Heart left ventricle (tissue), 16 donors: ENCODE measurements at regions of chr10 and their contacts with region 1.

Region 1: DNA sequence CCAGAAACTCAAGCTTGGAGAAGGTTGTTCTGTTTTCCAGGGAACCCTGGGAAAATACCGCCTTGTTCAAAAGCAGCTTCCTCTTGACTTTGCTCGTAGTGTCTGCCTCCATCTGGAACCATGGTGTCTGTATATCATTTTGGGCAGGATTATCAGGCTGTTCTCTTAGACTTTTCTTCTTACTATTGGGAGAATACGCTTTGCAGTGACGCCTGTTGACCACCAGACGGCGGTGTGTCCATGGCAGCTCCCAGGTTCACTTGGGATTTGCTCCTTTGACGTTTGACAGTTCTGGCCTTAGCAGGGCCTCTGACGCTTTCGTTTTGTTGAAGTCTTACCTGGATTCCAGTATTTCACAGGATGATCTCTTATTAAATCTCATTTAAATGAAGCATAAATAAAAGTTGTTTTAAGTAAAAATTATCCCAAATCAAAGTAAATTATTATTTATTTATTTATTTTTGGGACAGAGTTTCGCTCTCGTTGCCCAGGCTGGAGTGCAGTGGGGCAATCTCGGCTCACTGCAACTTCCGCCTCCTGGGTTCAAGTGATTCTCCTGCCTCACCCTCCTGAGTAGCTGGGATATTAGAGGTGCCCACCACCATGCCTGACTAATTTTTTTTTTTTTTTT is 41.8 kb upstream of the GJD4 start:
- DNase-seq: peak in 4 of 5 donors; percentile 50 to 60 (median 54)
- ATAC-seq: peak in 2 of 4 donors; percentile 33 to 42
- H3K4me3 ChIP-seq: no peak overlapping the region
- H3K27ac ChIP-seq: peak overlapping the region in 5 of 12 donors; percentile 9 to 70 (median 52)
- H3K4me1 ChIP-seq: peaks cover 15 to 56% (median 42%) of the 10 kb centered on the region in 12 donors
- H3K27me3 ChIP-seq: no peaks in the 10 kb centered on the region
- CTCF ChIP-seq: peak; percentile 89 to 99 (median 96)
- POLR2A ChIP-seq: no peak

Region 2: GRCh38 chr10:35112571-35112970 is 450.8 kb before region 1 on chr10:
- intact Hi-C with region 1: loop called in 1 of 10 experiments (anchors 10 kb)
- DNase-seq: no peak
- ATAC-seq: no peak
- H3K4me3 ChIP-seq: no peak overlapping the region
- H3K27ac ChIP-seq: no peak overlapping the region
- H3K4me1 ChIP-seq: no peaks in the 10 kb centered on the region
- H3K27me3 ChIP-seq: no peaks in the 10 kb centered on the region
- CTCF ChIP-seq: no peak
- POLR2A ChIP-seq: no peak

Region 3: GRCh38 chr10:35336084-35336831 is 227.1 kb before region 1 on chr10 and contains the start of gene CCNY:
- intact Hi-C with region 1: loop called in 9 of 10 experiments (anchors 2 to 10 kb)
- DNase-seq: peak; percentile 84 to 91 (median 88)
- ATAC-seq: peak; percentile 77 to 92 (median 88)
- H3K4me3 ChIP-seq: peak within 1 kb of the TSS; percentile 77 to 99 (median 95)
- H3K27ac ChIP-seq: peak within 1 kb of the TSS; percentile 83 to 94 (median 90)
- H3K4me1 ChIP-seq: peaks cover 19 to 78% (median 66%) of the 10 kb centered on the region in 12 donors
- H3K27me3 ChIP-seq: no peaks in the 10 kb centered on the region
- CTCF ChIP-seq: peak in 1 of 12 donors; percentile 6
- POLR2A ChIP-seq: peak in 1 of 2 donors; percentile 73
- total RNA-seq, gene CCNY: 39.7 to 106 (median 81.6) TPM

Region 4: DNA sequence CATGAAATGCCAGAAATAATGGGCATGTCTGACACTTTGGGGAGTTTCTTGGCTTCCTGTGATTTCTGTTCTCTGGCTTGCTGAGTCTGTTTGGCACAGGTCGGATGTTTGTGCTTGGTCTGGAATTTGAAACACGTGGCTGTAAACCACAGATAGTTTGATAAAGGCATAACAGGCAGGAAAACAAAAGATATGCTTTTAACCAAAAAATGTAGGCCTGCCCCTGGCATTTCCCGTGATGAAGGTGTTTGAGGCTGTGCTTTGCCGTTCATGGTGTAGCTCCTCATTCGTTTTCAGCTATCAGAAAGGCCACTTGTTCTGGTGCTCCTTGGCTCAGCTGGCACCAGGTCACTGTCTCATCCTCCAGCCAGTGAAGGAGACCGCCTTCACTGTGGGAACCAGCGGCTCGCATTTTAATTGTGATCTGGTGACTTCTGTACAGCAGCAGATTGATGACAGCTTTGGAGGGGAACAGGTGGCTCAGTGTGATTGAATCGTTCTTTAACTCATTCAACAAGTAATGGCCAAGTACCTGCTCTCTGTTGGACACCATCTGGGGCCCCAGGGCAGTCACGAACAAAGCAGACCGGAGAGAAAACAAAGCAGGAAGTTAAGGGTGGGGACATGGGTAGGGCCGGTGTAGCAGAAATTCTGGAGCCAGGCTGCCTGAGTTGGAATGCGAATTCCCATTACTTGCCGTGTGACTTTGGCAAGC is 115.5 kb before region 1 on chr10:
- intact Hi-C with region 1: loop called in 2 of 10 experiments (anchors 10 kb)
- DNase-seq: no peak
- ATAC-seq: peak in 3 of 4 donors; percentile 29 to 36 (median 31)
- H3K4me3 ChIP-seq: peak overlapping the region in 3 of 12 donors; percentile 6 to 12 (median 11)
- H3K27ac ChIP-seq: peak overlapping the region; percentile 69 to 95 (median 82)
- H3K4me1 ChIP-seq: peaks cover 0 to 84% (median 74%) of the 10 kb centered on the region in 12 donors
- H3K27me3 ChIP-seq: no peaks in the 10 kb centered on the region
- CTCF ChIP-seq: no peak
- POLR2A ChIP-seq: no peak

Region 5: DNA sequence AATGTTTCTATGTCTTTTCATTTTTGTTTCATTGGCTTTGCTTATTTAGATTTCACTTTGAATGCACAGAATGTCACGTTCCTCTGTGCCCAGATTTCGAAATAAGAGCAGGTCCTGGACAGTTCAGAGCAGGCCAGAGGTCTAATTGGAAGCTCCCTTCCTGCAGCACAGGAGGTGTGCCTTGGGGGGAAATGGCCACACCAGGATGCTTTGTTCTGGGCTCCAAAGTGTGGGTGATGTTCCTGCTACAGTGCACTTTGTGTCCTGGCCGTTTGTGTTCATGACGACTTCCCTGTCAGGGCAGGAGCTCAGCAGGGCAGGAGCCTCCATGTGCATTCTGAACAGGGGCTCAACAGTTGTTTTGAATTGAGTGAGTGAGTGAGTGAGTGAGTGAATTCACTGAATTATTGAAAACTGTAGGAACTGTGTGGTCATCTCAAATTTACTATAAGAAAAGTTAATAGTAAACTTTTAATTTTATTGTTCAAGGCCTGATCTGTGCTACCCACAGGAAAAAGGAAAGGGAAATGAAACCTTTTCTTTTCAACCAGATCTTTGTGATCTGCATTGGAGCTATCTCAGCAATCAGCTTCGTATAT is 67.8 kb before region 1 on chr10:
- intact Hi-C with region 1: loop called in 1 of 10 experiments (anchors 5 kb)
- DNase-seq: peak in 2 of 5 donors; percentile 33 to 52
- ATAC-seq: peak; percentile 69 to 76 (median 72)
- H3K4me3 ChIP-seq: no peak overlapping the region
- H3K27ac ChIP-seq: peak overlapping the region in 11 of 12 donors; percentile 0 to 64 (median 35)
- H3K4me1 ChIP-seq: peaks cover 0 to 73% (median 32%) of the 10 kb centered on the region in 12 donors
- H3K27me3 ChIP-seq: no peaks in the 10 kb centered on the region
- CTCF ChIP-seq: no peak
- POLR2A ChIP-seq: no peak